ENCODE measurements at regions of chr12 and their contacts with region 1.

Region 1: DNA sequence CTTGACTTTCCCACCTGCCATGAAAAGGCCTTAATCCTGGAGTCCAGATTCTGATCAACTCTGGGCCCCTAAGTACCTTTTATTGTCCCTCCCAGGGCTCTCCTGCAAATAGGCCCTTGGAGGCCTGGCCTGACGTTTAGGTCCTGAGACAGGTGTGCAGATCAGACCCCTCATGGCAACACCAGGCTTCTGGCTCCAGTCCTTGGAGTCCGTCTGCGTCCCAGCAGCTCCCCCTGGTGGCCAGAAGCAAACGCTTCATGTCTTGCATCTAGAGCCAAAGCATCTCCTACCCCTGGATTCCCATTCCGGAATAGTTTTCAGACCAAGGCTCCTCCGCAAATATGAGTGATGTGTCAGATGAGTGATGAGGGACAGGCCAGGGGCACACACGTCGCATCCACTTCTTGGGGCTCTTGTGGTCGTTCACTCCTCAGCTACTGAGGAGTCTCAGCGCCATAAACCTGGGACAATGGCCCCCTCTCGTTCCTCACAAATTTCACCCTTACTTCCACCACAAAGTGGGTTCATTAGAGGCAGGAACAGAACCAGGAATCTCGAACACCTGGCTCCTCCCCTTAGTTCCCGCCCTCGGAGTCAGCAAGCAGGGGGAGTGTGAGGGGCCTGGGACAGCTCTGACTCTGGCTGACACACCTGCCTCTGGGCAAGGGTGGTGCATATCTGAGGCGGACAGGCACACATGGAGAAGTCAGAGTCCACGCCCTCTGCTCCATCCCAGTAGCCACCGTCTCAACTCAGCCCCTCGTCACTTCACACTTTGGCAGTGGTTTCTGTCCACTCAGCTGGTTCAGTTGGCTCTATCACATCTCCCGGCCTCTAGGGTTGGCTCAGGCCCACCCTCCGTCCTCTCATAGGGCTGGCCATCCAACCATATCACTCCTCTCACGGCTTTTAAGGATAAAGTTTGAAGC is 77.9 kb upstream of the PWP1 start:
- DNase-seq: peak; percentile 40 to 49
- ATAC-seq: peak in 1 of 2 donors; percentile 60
- H3K4me3 ChIP-seq: no peak overlapping the region
- H3K27ac ChIP-seq: no peak overlapping the region
- H3K4me1 ChIP-seq: no peaks in the 10 kb centered on the region
- H3K27me3 ChIP-seq: no peaks in the 10 kb centered on the region
- CTCF ChIP-seq: peak; percentile 36 to 79 (median 69)
- POLR2A ChIP-seq: no peak

Region 2: GRCh38 chr12:106282457-106283097 is 1325.2 kb before region 1 on chr12:
- in situ Hi-C with region 1: no loop called
- intact Hi-C with region 1: no loop called
- DNase-seq: peak in 1 of 2 donors; percentile 28
- ATAC-seq: peak; percentile 36 to 79
- H3K4me3 ChIP-seq: no peak overlapping the region
- H3K27ac ChIP-seq: no peak overlapping the region
- H3K4me1 ChIP-seq: peaks cover 0 to 5% of the 10 kb centered on the region in 2 donors
- H3K27me3 ChIP-seq: no peaks in the 10 kb centered on the region
- CTCF ChIP-seq: peak; percentile 66 to 75 (median 70)
- POLR2A ChIP-seq: no peak

Region 3: DNA sequence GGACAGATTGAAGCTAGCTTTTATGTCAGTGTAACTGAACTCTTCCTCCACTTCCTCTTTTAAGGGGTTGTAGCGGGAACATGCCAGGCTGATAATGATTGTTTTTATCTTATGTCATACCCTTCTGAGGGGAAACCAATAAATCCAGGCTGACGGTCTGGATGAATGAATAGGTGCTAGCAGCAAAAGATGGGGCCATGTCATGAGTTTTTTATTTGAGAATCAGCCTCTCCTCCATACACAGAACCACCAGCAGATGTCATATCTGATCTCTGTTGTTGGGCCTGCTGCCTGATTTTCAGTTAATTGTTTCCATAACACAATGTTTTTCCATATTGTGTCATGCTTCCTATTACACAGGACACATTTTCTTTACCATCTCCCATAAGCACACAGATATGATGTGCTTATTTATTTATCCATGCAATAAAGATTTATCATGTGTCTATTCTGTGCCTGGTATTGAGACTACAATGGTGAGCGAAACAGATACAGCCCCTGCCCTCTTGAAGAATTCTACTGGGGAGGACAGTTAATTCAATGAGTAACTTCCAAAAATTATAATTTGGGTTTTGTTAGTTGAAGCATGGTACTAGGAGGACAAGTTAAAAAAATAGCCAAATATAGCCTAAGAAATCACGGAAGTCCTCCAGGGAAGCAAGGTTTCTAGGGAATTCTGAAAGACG is 480.8 kb before region 1 on chr12:
- in situ Hi-C with region 1: loop called (anchors 5 to 10 kb)
- intact Hi-C with region 1: loop called (anchors 2 kb)
- DNase-seq: no peak
- ATAC-seq: no peak
- H3K4me3 ChIP-seq: no peak overlapping the region
- H3K27ac ChIP-seq: no peak overlapping the region
- H3K4me1 ChIP-seq: no peaks in the 10 kb centered on the region
- H3K27me3 ChIP-seq: no peaks in the 10 kb centered on the region
- CTCF ChIP-seq: no peak
- POLR2A ChIP-seq: no peak

Region 4: GRCh38 chr12:107131832-107132616 is 475.7 kb before region 1 on chr12:
- in situ Hi-C with region 1: loop called (anchors 5 to 10 kb)
- intact Hi-C with region 1: loop called (anchors 2 kb)
- DNase-seq: no peak
- ATAC-seq: no peak
- H3K4me3 ChIP-seq: no peak overlapping the region
- H3K27ac ChIP-seq: no peak overlapping the region
- H3K4me1 ChIP-seq: no peaks in the 10 kb centered on the region
- H3K27me3 ChIP-seq: no peaks in the 10 kb centered on the region
- CTCF ChIP-seq: peak in 4 of 5 experiments; percentile 38 to 66 (median 54)
- POLR2A ChIP-seq: no peak